Activated CD4-positive, alpha-beta memory T cell treated with anti-CD3 and anti-CD28 coated beads for 36 hours (primary cell): ENCODE measurements at regions of chr13 and their contacts with region 1.

Region 1: DNA sequence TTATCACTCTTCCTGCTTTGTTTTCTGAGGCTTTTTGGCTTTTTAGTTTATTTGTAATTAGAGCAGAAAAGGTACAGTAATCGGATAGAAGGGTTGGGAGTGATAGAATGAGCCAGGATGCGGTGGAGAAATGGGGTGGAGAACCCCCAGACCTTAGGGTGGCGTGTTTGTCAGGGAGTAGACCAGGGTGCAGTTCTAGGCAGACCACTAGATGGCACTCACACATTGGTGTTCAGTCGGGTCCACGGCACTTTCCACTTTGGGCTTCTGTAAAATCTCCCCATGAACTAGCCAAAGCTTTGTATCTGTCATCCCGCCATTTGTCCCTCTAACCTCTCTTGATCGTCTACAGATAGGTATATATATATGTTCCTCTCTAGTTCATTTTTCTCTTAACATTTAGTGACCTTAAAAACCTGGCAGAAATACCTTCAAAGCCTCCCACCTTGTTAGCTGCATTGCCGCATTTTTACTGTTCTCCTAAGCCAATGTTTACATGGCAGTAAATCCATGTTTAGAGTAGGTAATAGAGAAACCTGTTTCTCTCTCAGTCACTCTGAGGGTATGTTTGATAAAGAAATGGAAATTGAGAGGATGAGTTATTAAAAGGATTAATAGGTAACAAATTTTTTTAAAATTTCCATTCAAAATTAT is 154.9 kb downstream of the TM9SF2 start:
- DNase-seq: peak; percentile 88
- H3K4me3 Mint-ChIP-seq: no peak overlapping the region
- H3K27ac Mint-ChIP-seq: peak overlapping the region; percentile 38
- H3K4me1 Mint-ChIP-seq: peaks cover 42% of the 10 kb centered on the region
- H3K27me3 Mint-ChIP-seq: no peaks in the 10 kb centered on the region

Region 2: DNA sequence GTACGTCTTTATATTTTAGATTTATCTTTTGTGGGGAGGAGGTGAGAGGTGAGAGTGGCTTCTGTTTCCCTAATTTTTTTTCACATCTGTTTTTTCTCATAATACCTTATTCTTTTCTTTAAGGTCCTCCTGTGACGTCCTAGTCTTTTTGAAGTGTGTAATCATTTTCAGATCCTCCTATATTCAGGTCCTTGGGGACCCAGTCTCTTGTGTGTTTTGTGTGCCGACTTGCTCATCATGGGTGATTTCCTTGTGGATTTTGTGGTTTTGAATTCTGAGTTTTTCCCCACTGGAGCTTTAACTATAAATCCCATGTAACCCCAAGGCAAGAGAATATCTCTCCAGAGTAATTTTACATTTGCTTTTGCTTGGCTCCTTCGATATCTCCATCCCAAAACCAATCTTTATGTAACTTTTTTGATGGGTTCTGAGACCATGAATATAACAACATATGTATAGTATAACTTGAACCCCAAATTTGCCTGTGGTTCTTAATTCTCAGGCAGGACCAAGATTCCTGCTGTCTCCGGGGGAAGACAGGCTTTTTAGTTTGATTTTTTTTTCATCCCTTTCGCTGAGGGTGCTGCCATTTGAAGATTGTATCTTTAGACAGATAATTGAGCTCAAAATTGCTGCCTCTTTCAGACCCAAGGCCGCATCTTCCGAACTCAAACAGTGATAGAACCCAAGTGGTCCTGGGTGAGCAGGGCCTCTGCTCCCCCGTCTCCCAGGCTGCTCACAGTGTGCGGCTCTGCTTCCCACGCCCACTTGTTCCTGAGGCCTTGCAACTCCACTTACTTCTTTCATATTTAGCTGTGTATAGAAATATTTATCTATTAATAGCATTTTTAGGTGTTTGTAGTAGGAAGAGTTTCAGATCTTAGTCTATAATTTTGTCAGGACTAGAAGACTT is 289.9 kb before region 1 on chr13:
- CTCF ChIA-PET with region 1: no interaction called
- POLR2A ChIA-PET with region 1: no interaction called
- intact Hi-C with region 1: no loop called
- DNase-seq: no peak
- H3K4me3 Mint-ChIP-seq: peak overlapping the region; percentile 13
- H3K27ac Mint-ChIP-seq: peak overlapping the region; percentile 15
- H3K4me1 Mint-ChIP-seq: peaks cover 87% of the 10 kb centered on the region
- H3K27me3 Mint-ChIP-seq: no peaks in the 10 kb centered on the region

Region 3: DNA sequence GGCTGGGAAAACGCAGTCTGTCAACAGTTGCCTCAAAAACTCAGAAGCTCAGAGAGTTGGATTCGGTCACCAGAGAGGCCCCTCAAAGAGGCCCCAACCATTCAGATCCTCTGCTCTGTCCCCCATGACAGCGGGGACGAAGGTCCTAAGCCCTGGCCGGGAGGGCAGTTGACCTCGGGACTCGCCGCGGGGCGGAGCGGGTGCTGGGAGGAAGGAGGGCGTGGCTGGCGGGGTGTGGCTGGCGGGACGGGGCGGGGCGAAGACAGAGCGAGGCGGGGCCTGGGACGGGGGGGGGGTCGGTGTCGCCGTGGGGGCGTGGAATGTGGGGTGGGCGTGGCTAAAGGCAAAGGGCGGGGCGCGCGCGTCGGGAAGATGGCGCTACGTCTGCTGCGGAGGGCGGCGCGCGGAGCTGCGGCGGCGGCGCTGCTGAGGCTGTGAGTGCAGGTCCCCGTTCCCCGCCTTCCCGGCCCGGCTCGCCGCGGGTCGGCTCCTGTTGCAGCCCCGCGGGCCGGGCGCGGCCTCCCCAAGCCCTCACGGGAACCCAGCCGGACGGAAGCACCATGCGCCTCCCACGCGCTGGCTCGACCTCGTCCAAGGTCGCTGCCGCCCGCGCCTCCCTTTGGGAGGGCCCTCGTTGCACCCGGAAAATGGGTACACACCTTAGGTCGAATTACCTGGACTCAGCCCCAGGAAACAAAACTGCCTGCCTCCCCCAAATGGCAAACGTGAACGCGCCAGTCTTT is 49.7 kb before region 1 on chr13:
- CTCF ChIA-PET with region 1: interaction called, 8 read pairs
- POLR2A ChIA-PET with region 1: no interaction called
- intact Hi-C with region 1: loop called (anchors 1 kb)
- DNase-seq: peak; percentile 93
- H3K4me3 Mint-ChIP-seq: peak within 1 kb of the TSS; percentile 85
- H3K27ac Mint-ChIP-seq: peak within 1 kb of the TSS; percentile 72
- H3K4me1 Mint-ChIP-seq: peaks cover 33% of the 10 kb centered on the region
- H3K27me3 Mint-ChIP-seq: no peaks in the 10 kb centered on the region

Region 4: GRCh38 chr13:99900960-99901359 is 244.7 kb after region 1 on chr13:
- CTCF ChIA-PET with region 1: interaction called, 22 read pairs
- POLR2A ChIA-PET with region 1: no interaction called
- intact Hi-C with region 1: loop called (anchors 5 kb)
- DNase-seq: no peak
- H3K4me3 Mint-ChIP-seq: no peak overlapping the region
- H3K27ac Mint-ChIP-seq: no peak overlapping the region
- H3K4me1 Mint-ChIP-seq: no peaks in the 10 kb centered on the region
- H3K27me3 Mint-ChIP-seq: peaks cover 43% of the 10 kb centered on the region

Region 5: GRCh38 chr13:99980201-99980823 is 324.1 kb after region 1 on chr13:
- CTCF ChIA-PET with region 1: interaction called, 4 read pairs
- POLR2A ChIA-PET with region 1: no interaction called
- intact Hi-C with region 1: loop called (anchors 5 kb)
- DNase-seq: peak; percentile 66
- H3K4me3 Mint-ChIP-seq: no peak overlapping the region
- H3K27ac Mint-ChIP-seq: no peak overlapping the region
- H3K4me1 Mint-ChIP-seq: peaks cover 18% of the 10 kb centered on the region
- H3K27me3 Mint-ChIP-seq: peaks cover 66% of the 10 kb centered on the region

Region 6: GRCh38 chr13:100506600-100507422 is 850.6 kb after region 1 on chr13:
- CTCF ChIA-PET with region 1: interaction called, 6 read pairs
- POLR2A ChIA-PET with region 1: no interaction called
- intact Hi-C with region 1: loop called (anchors 2 kb)
- DNase-seq: peak; percentile 18
- H3K4me3 Mint-ChIP-seq: peak overlapping the region; percentile 36
- H3K27ac Mint-ChIP-seq: no peak overlapping the region
- H3K4me1 Mint-ChIP-seq: peaks cover 24% of the 10 kb centered on the region
- H3K27me3 Mint-ChIP-seq: peaks cover 27% of the 10 kb centered on the region

Region 7: GRCh38 chr13:101127741-101128353 is 1471.6 kb after region 1 on chr13:
- CTCF ChIA-PET with region 1: interaction called, 12 read pairs
- POLR2A ChIA-PET with region 1: no interaction called
- intact Hi-C with region 1: loop called (anchors 10 kb)
- DNase-seq: peak; percentile 17
- H3K4me3 Mint-ChIP-seq: no peak overlapping the region
- H3K27ac Mint-ChIP-seq: no peak overlapping the region
- H3K4me1 Mint-ChIP-seq: peaks cover 2% of the 10 kb centered on the region
- H3K27me3 Mint-ChIP-seq: peaks cover 4% of the 10 kb centered on the region